T-cell (primary cell): ENCODE measurements at regions of chr11 and their contacts with region 1.

Region 1: GRCh38 chr11:9825315-9825714 is 161.4 kb downstream of the SWAP70 start:
- DNase-seq: no peak
- ATAC-seq: no peak
- H3K4me3 ChIP-seq: no peak overlapping the region
- H3K4me3 Mint-ChIP-seq: no peak overlapping the region
- H3K27ac ChIP-seq: no peak overlapping the region
- H3K27ac Mint-ChIP-seq: no peak overlapping the region
- H3K4me1 ChIP-seq: no peaks in the 10 kb centered on the region
- H3K4me1 Mint-ChIP-seq: no peaks in the 10 kb centered on the region
- H3K27me3 ChIP-seq: no peaks in the 10 kb centered on the region
- H3K27me3 Mint-ChIP-seq: no peaks in the 10 kb centered on the region

Region 2: DNA sequence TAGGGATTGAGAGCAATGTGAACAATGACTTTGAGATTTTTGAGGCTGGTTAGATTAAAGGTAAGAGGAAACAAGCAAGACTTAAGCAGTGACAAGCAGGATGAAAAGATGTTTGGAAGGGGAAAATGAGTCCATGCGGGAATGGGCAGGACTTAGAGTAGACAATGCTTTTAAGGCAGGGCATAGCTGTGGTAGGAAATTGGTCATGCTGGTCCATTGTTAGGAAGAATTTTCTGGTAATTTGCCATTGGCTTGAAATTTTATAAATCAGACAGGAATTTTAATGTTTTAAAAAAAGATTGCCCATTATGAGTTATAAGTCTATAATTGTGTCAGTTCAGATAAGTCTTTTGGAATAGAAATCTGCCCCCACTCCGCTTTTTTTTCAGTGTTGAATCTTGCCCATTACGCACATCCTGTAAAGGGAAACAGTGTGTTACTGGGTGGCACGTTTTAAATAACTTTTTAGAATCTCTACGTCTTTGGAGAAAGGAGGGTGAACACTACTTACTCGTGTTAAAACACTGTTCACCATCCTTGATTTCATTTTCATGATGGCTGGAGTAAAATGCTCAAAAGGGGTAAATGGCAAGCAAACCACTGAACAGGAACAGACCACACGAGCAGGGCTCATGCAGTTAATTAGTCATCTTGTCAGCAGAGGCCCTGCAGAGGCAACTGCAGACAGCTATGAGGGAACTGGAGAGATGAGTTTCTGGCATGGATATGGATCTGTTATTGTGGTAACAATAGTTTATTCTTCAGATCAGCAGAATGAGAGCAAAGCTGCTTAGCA is 136.4 kb before region 1 on chr11:
- CTCF ChIA-PET with region 1: no interaction called
- POLR2A ChIA-PET with region 1: no interaction called
- DNase-seq: peak in 1 of 35 experiments; percentile 10
- ATAC-seq: peak in 3 of 4 experiments; percentile 31 to 73 (median 68)
- H3K4me3 ChIP-seq: no peak overlapping the region
- H3K4me3 Mint-ChIP-seq: no peak overlapping the region
- H3K27ac ChIP-seq: no peak overlapping the region
- H3K27ac Mint-ChIP-seq: no peak overlapping the region
- H3K4me1 ChIP-seq: peaks cover 0 to 4% of the 10 kb centered on the region in 2 experiments
- H3K4me1 Mint-ChIP-seq: peaks cover 0 to 7% (median 0%) of the 10 kb centered on the region in 3 donors
- H3K27me3 ChIP-seq: no peaks in the 10 kb centered on the region
- H3K27me3 Mint-ChIP-seq: no peaks in the 10 kb centered on the region

Region 3: GRCh38 chr11:9808943-9809342 is 16.4 kb before region 1 on chr11:
- CTCF ChIA-PET with region 1: no interaction called
- POLR2A ChIA-PET with region 1: no interaction called
- DNase-seq: no peak
- ATAC-seq: no peak
- H3K4me3 ChIP-seq: no peak overlapping the region
- H3K4me3 Mint-ChIP-seq: no peak overlapping the region
- H3K27ac ChIP-seq: no peak overlapping the region
- H3K27ac Mint-ChIP-seq: no peak overlapping the region
- H3K4me1 ChIP-seq: no peaks in the 10 kb centered on the region
- H3K4me1 Mint-ChIP-seq: no peaks in the 10 kb centered on the region
- H3K27me3 ChIP-seq: no peaks in the 10 kb centered on the region
- H3K27me3 Mint-ChIP-seq: no peaks in the 10 kb centered on the region

Region 4: GRCh38 chr11:10150800-10151199 is 325.5 kb after region 1 on chr11:
- CTCF ChIA-PET with region 1: interaction called in 1 of 2 experiments, 10 read pairs
- POLR2A ChIA-PET with region 1: no interaction called
- DNase-seq: no peak
- ATAC-seq: no peak
- H3K4me3 ChIP-seq: no peak overlapping the region
- H3K4me3 Mint-ChIP-seq: no peak overlapping the region
- H3K27ac ChIP-seq: no peak overlapping the region
- H3K27ac Mint-ChIP-seq: no peak overlapping the region
- H3K4me1 ChIP-seq: no peaks in the 10 kb centered on the region
- H3K4me1 Mint-ChIP-seq: no peaks in the 10 kb centered on the region
- H3K27me3 ChIP-seq: no peaks in the 10 kb centered on the region
- H3K27me3 Mint-ChIP-seq: no peaks in the 10 kb centered on the region